GM12878 (cell line): ENCODE measurements at regions of chr13 and their contacts with region 1.

Region 1: DNA sequence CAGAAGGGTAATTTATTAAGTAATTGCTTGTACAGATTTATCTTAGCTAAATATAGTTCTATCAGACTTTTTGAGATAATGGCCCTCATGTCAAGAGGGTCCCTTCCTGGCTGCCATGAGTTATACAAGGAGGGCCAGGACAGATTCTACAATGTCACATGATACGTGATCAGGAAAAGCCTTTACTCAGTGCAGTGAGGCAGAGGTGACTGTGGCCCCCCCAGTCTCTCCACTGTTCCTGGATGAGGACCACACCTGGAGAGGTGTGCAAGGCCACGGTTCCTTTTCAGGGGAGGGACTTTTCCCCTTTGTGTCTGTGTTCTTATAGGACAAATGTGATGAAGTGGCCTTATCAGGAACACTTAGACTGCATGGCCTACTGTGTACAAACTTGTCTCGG is 54.3 kb upstream of the LRCH1 start:
- DNase-seq: no peak
- ATAC-seq: no peak
- H3K4me3 ChIP-seq: no peak overlapping the region
- H3K27ac ChIP-seq: no peak overlapping the region
- H3K4me1 ChIP-seq: no peaks in the 10 kb centered on the region
- H3K27me3 ChIP-seq: no peaks in the 10 kb centered on the region
- CTCF ChIP-seq: no peak
- EP300 ChIP-seq: no peak
- POLR2A ChIP-seq: no peak
- RAD21 ChIP-seq: no peak

Region 2: DNA sequence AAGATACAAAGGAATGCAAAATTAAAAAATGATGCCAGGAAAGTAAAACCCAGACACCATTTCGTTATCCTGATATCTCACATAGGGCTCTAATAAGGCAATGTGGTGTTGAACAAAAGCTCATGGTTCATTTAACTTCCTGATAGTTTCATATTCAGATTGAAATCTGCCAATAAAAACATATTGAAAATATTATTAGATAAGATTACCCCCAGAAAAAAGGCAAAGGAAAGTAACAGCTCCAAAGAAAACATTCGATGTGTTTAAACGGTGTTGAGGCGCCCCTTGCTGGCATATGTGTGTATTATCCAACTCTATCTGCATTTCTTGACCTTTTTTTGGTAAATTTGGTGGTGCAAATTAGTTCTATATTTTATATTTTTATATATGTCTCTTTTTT is 222.4 kb after region 1 on chr13:
- CTCF ChIA-PET with region 1: interaction called, 19 read pairs
- POLR2A ChIA-PET with region 1: no interaction called
- RAD21 ChIA-PET with region 1: interaction called, 10 read pairs
- SMC1A ChIA-PET with region 1: interaction called, 17 read pairs
- in situ Hi-C with region 1: loop called (anchors 5 kb)
- intact Hi-C with region 1: loop called (anchors 1 kb)
- DNase-seq: no peak
- ATAC-seq: peak; percentile 65
- H3K4me3 ChIP-seq: no peak overlapping the region
- H3K27ac ChIP-seq: no peak overlapping the region; the same call in 1 of the 2 replicates
- H3K4me1 ChIP-seq: peaks cover 8% of the 10 kb centered on the region; the same call in 1 of the 2 replicates
- H3K27me3 ChIP-seq: no peaks in the 10 kb centered on the region
- CTCF ChIP-seq: peak; percentile 37 to 57 (median 56); a peak in 5 of 6 replicates
- EP300 ChIP-seq: no peak
- POLR2A ChIP-seq: no peak
- RAD21 ChIP-seq: peak; percentile 75